Mammary epithelial cell (primary cell): ENCODE measurements at regions of chr14 and their contacts with region 1.

Region 1: DNA sequence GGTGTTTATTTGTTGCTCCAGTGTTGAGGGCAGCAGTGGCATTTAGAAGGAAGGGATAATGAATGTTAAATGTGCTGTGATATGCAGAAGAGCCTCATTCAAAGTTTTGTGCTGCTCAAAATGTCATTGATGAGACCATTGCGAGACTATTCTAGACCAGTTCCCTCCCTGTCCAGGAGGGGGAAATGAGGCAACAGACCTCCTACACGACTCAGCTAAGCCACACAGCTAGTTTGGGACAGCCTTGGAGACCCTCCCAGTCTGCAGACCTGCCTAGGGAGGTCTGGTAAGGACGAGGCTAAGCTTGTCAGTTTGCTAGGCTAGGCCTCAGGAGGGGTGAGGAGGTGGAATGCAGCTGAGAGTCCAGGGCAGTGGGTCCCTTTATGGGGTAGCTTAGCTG is 116.0 kb downstream of the NRXN3 start:
- DNase-seq: no peak
- H3K4me3 ChIP-seq: no peak overlapping the region
- H3K27ac ChIP-seq: no peak overlapping the region
- H3K4me1 ChIP-seq: no peaks in the 10 kb centered on the region
- H3K27me3 ChIP-seq: no peaks in the 10 kb centered on the region
- CTCF ChIP-seq: no peak

Region 2: GRCh38 chr14:78088916-78089315 is 197.3 kb before region 1 on chr14:
- CTCF ChIA-PET with region 1: no interaction called
- dilution Hi-C with region 1: no loop called
- in situ Hi-C with region 1: no loop called
- intact Hi-C with region 1: no loop called
- DNase-seq: no peak
- H3K4me3 ChIP-seq: no peak overlapping the region
- H3K27ac ChIP-seq: no peak overlapping the region
- H3K4me1 ChIP-seq: no peaks in the 10 kb centered on the region
- H3K27me3 ChIP-seq: no peaks in the 10 kb centered on the region
- CTCF ChIP-seq: no peak

Region 3: GRCh38 chr14:78227248-78228077 is 58.7 kb before region 1 on chr14:
- CTCF ChIA-PET with region 1: no interaction called
- dilution Hi-C with region 1: loop called (anchors 5 kb)
- in situ Hi-C with region 1: no loop called
- intact Hi-C with region 1: no loop called
- DNase-seq: peak; percentile 7
- H3K4me3 ChIP-seq: no peak overlapping the region
- H3K27ac ChIP-seq: no peak overlapping the region
- H3K4me1 ChIP-seq: no peaks in the 10 kb centered on the region
- H3K27me3 ChIP-seq: no peaks in the 10 kb centered on the region
- CTCF ChIP-seq: no peak